ENCODE measurements at regions of chr6 and their contacts with region 1.

Region 1: DNA sequence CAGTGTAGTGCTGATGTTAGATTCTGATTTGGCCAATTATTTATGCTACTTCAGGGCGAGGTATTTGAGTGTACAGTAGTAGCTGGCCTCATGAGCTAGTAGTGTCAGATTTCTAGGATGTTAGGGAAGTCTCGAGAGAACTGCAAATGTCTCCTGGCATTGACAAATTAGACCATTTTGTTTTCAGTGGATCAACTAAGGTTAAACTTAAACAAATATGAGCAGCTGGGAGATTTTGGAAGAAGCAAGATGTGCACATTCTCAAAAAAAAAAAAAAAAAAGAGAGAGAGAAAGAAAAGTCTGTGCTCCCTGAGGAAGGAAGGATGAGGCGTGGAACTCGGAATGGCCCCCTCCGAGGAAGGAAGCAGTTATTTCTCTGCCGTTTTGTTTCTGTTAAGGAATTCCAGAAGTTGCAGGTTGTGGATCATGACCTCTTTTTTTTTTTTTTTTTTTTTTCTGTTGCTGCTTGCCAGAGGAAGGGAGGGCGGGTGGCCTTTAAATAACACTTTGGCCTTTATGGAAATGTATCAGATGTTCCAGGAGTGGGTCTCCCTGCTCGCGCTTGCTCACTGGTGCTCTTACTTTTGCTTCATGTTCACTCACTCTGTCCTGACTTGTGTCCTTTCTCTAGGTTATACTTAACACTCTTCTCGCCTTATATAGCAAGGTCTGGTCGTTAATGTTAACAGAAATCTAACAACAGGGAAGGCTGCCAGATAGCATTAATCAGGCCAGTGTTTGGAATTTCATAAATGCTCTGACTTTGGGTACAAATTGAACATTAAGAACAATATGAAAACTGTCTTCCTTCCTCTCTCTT is 124.4 kb downstream of the TCP11 start:
- DNase-seq: peak; percentile 68
- ATAC-seq: peak; percentile 76

Region 2: DNA sequence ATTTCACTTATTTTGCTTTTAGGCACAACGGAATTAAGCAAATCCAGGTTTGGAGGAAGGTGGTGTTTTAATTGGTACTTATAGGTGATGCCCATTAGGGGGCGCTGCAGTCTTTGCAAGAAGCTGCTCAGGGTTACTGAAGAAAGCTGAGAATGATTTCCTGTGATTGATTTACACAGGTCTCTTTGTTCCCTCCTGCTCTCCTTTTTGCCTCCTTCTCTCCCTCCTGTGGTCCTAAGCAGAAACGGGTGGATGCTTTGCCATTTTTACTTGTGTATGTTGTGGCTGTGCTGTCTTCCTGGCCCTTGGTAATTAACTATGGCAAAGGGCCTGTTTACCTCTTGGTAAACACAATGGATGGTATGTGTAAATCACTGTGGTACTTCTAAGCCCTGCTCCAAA is 29.9 kb before region 1 on chr6:
- intact Hi-C with region 1: no loop called
- DNase-seq: peak; percentile 48
- ATAC-seq: peak; percentile 83

Region 3: GRCh38 chr6:35064757-35065440 is 48.2 kb after region 1 on chr6:
- intact Hi-C with region 1: loop called (anchors 10 kb)
- DNase-seq: no peak
- ATAC-seq: peak; percentile 36

Region 4: DNA sequence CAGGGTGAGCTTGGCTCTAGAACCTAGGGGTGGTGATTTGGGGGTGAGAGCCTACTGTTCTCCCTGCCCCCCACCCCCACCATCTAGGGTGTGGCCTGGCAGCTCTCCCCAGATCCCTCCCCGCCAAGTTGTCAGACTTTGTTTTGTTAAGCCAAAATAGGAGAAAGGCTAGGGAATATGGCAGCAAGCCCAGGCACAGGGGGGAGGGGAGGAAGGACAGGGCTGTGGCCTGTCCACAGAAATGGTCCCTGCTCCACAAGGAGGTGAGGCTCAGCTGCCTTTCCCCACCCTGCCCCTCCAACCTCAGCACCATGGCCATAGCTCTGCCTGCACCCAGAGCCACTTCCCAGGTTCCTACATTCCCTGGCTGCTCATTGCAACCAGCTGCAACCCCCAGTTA is 214.2 kb after region 1 on chr6:
- intact Hi-C with region 1: no loop called
- DNase-seq: peak; percentile 80
- ATAC-seq: peak; percentile 71

Region 5: GRCh38 chr6:35993150-35993549 is 976.4 kb after region 1 on chr6:
- intact Hi-C with region 1: no loop called
- DNase-seq: no peak
- ATAC-seq: no peak

Region 6: DNA sequence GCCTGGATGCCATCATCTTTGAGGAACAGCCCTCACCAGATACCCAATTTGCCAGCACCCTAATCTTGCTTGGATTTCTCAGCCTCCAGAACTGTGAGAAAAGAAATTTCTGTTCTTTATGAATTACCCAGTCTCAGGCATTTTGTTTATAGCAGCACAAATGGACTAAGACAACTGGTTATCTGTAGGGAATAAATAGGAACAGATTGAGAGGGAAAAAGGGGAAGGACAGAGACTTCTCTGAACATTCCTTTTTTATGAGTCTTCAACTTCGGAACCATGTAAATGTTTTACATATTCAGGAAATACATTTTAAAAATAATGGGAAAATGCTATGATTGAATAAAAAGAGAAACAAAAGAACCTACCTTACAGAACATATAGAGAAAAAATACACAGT is 1447.0 kb after region 1 on chr6:
- intact Hi-C with region 1: no loop called
- DNase-seq: no peak
- ATAC-seq: no peak

Measured in left ventricle myocardium superior (tissue), 1 donor.